ENCODE measurements at regions of chr16 and their contacts with region 1.

Region 1: GRCh38 chr16:66588981-66589713 is 9.9 kb downstream of the CMTM2 start:
- DNase-seq: peak; percentile 88
- H3K4me3 Mint-ChIP-seq: peak overlapping the region; percentile 50
- H3K27ac Mint-ChIP-seq: no peak overlapping the region
- H3K4me1 Mint-ChIP-seq: peaks cover 32% of the 10 kb centered on the region
- H3K27me3 Mint-ChIP-seq: no peaks in the 10 kb centered on the region

Region 2: DNA sequence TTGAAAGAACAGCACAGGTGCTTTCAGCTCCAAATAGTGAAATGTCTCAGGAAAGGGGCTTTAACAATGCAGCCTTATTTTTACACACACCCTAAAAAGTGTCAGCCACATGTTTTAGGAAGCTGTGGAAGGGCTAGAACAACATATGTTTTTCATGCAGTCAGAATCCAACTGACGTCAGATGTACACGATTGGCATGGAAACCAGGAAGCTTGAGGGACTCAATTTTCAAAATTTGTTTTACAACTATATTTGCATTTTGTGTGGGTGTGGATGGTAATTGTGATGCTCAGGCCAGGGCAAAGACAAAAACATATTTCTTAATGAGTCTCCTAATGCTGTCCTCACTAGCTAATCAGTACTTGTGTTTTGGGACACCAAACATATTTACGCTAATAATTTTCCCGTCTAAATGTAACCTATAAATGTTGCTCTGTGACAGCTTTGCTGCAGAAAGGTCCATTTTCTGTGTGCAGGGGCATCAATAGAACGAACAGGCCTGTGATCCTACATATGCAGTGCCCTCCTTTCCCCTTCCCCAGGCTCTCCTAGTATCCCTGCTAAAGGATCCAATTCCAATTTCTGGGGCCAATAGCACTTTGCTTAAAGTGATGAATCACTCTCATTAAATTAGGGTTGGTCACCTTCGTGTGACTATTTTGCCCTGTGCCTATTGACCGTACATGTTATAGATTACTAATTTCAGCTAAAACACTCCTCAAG is 656.6 kb before region 1 on chr16:
- CTCF ChIA-PET with region 1: no interaction called
- intact Hi-C with region 1: no loop called
- DNase-seq: no peak
- H3K4me3 Mint-ChIP-seq: no peak overlapping the region
- H3K27ac Mint-ChIP-seq: no peak overlapping the region
- H3K4me1 Mint-ChIP-seq: no peaks in the 10 kb centered on the region
- H3K27me3 Mint-ChIP-seq: no peaks in the 10 kb centered on the region

Region 3: DNA sequence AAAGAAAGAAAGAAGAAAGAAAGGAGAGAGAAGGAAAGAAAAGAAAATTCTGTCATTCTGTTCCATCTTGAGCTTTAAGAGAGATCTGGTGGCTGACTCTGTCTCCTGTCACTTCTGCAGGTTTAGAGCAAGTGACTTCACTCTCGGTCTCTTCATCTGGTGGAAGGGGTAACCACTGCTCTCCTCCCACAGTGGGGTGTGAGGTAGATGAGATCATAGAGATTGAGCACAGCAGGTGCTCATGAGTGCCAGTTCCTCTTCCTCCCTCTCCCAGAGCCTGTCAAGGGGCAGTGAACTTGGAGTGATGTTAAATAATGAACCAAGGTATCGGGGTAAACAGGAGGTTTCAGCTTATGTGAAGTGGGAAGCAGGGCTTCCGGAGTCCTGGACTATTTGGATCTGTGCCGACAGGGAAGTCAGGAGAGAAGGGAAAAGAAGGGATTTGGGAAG is 114.4 kb before region 1 on chr16:
- CTCF ChIA-PET with region 1: interaction called, 31 read pairs
- intact Hi-C with region 1: loop called (anchors 1 kb)
- DNase-seq: peak; percentile 73
- H3K4me3 Mint-ChIP-seq: no peak overlapping the region
- H3K27ac Mint-ChIP-seq: peak overlapping the region; percentile 1
- H3K4me1 Mint-ChIP-seq: peaks cover 24% of the 10 kb centered on the region
- H3K27me3 Mint-ChIP-seq: no peaks in the 10 kb centered on the region

Region 4: GRCh38 chr16:66511615-66512500 is 77.3 kb before region 1 on chr16:
- CTCF ChIA-PET with region 1: interaction called, 8 read pairs
- intact Hi-C with region 1: loop called (anchors 1 kb)
- DNase-seq: peak; percentile 42
- H3K4me3 Mint-ChIP-seq: no peak overlapping the region
- H3K27ac Mint-ChIP-seq: no peak overlapping the region
- H3K4me1 Mint-ChIP-seq: peaks cover 16% of the 10 kb centered on the region
- H3K27me3 Mint-ChIP-seq: no peaks in the 10 kb centered on the region

Region 5: DNA sequence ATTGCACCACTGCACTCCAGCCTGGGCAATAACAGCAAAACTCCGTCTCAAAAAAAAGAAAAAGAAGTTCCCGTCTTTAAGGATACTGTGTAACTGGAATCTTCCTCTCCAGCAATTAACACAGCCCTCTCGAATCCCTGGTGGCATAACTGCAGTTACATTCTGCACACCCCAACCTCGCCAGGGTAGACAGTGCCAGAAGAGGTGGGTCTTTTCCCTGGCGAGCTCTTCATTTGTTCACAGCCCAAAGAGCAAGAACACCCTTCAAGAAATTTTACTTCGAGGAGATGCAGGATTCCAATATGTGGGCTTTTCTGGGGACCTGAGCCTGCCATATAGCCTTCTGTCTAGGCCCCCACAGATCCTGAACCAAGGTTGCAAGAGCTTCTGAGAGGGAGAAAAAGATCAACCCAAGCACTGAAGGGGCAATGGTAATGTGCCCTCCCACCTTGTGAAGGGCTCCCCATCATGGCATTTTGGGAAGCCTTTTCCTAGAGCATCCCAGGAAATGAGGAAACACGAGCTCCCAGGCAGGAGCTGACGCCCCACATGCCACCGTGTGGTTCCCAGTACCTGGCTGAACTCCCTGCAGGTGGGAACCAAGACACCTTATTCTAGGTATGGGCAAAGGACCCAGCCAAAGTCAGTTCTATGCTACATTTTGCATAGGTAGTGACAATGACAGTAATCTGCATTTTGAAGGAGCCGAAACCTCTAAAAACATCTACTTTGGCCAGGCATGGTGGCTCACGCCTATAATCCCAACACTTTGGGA is 66.1 kb before region 1 on chr16:
- CTCF ChIA-PET with region 1: no interaction called
- intact Hi-C with region 1: no loop called
- DNase-seq: no peak
- H3K4me3 Mint-ChIP-seq: peak overlapping the region; percentile 6
- H3K27ac Mint-ChIP-seq: peak overlapping the region; percentile 85
- H3K4me1 Mint-ChIP-seq: peaks cover 69% of the 10 kb centered on the region
- H3K27me3 Mint-ChIP-seq: no peaks in the 10 kb centered on the region

Region 6: GRCh38 chr16:66552286-66553177 is 36.6 kb before region 1 on chr16 and contains the start of gene CKLF:
- CTCF ChIA-PET with region 1: interaction called, 8 read pairs
- intact Hi-C with region 1: loop called (anchors 1 kb)
- DNase-seq: peak; percentile 90
- H3K4me3 Mint-ChIP-seq: peak within 1 kb of the TSS; percentile 87
- H3K27ac Mint-ChIP-seq: peak within 1 kb of the TSS; percentile 95
- H3K4me1 Mint-ChIP-seq: peaks cover 60% of the 10 kb centered on the region
- H3K27me3 Mint-ChIP-seq: no peaks in the 10 kb centered on the region
- total RNA-seq, gene CKLF: 114 to 126 TPM

Region 7: GRCh38 chr16:66608241-66609138 is 19.3 kb after region 1 on chr16:
- CTCF ChIA-PET with region 1: interaction called, 7 read pairs
- intact Hi-C with region 1: loop called (anchors 1 kb)
- DNase-seq: peak; percentile 89
- H3K4me3 Mint-ChIP-seq: no peak overlapping the region
- H3K27ac Mint-ChIP-seq: no peak overlapping the region
- H3K4me1 Mint-ChIP-seq: peaks cover 33% of the 10 kb centered on the region
- H3K27me3 Mint-ChIP-seq: no peaks in the 10 kb centered on the region

Measured in activated naive CD4-positive, alpha-beta T cell treated with anti-CD3 and anti-CD28 coated beads for 36 hours (primary cell).